T-cell (primary cell): ENCODE measurements at regions of chr10 and their contacts with region 1.

Region 1: DNA sequence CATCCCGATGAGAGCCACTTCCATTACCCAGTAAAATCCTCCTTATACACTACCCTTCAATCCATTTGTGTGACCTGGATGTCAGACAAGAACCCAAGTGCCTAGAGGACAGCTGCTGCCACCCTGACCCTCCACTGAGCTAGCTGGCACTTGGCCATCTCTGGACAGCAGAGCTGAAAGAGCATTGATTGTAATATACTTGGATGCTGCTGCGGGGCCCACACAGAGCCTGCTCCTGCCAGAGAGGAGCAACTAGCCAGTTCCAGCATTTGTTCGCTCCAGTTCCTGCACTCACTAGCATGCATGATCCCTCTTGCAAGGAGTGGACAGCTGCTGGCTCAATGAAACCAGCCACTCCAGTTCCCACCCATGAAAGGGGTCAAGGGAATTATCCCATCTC is 8.4 kb upstream of the TMEM254 start:
- DNase-seq: no peak
- ATAC-seq: no peak
- H3K4me3 ChIP-seq: no peak overlapping the region
- H3K4me3 Mint-ChIP-seq: no peak overlapping the region
- H3K27ac ChIP-seq: no peak overlapping the region
- H3K27ac Mint-ChIP-seq: no peak overlapping the region
- H3K4me1 ChIP-seq: no peaks in the 10 kb centered on the region
- H3K4me1 Mint-ChIP-seq: no peaks in the 10 kb centered on the region
- H3K27me3 ChIP-seq: peaks cover 0 to 5% of the 10 kb centered on the region in 2 experiments
- H3K27me3 Mint-ChIP-seq: no peaks in the 10 kb centered on the region

Region 2: GRCh38 chr10:80046629-80047441 is 23.2 kb before region 1 on chr10:
- CTCF ChIA-PET with region 1: interaction called in 1 of 2 experiments, 11 read pairs
- POLR2A ChIA-PET with region 1: interaction called in 1 of 2 experiments, 10 read pairs
- DNase-seq: peak; percentile 3 to 77 (median 56)
- ATAC-seq: peak; percentile 79 to 84 (median 83)
- H3K4me3 ChIP-seq: no peak overlapping the region
- H3K4me3 Mint-ChIP-seq: no peak overlapping the region
- H3K27ac ChIP-seq: no peak overlapping the region
- H3K27ac Mint-ChIP-seq: no peak overlapping the region
- H3K4me1 ChIP-seq: no peaks in the 10 kb centered on the region
- H3K4me1 Mint-ChIP-seq: peaks cover 0 to 1% (median 0%) of the 10 kb centered on the region in 3 donors
- H3K27me3 ChIP-seq: peaks cover 0 to 5% of the 10 kb centered on the region in 2 experiments
- H3K27me3 Mint-ChIP-seq: peaks cover 0 to 5% of the 10 kb centered on the region in 2 donors

Region 3: GRCh38 chr10:80126876-80127275 is 56.8 kb after region 1 on chr10:
- CTCF ChIA-PET with region 1: no interaction called
- POLR2A ChIA-PET with region 1: no interaction called
- DNase-seq: no peak
- ATAC-seq: no peak
- H3K4me3 ChIP-seq: no peak overlapping the region
- H3K4me3 Mint-ChIP-seq: no peak overlapping the region
- H3K27ac ChIP-seq: no peak overlapping the region
- H3K27ac Mint-ChIP-seq: no peak overlapping the region
- H3K4me1 ChIP-seq: no peaks in the 10 kb centered on the region
- H3K4me1 Mint-ChIP-seq: peaks cover 0 to under 1% (median 0%) of the 10 kb centered on the region in 3 donors
- H3K27me3 ChIP-seq: peaks cover 0 to 16% of the 10 kb centered on the region in 2 experiments
- H3K27me3 Mint-ChIP-seq: peaks cover 12 to 21% of the 10 kb centered on the region in 2 donors

Region 4: GRCh38 chr10:80158598-80159127 is 88.6 kb after region 1 on chr10:
- CTCF ChIA-PET with region 1: no interaction called
- POLR2A ChIA-PET with region 1: no interaction called
- DNase-seq: no peak
- ATAC-seq: no peak
- H3K4me3 ChIP-seq: no peak overlapping the region
- H3K4me3 Mint-ChIP-seq: no peak overlapping the region
- H3K27ac ChIP-seq: no peak overlapping the region
- H3K27ac Mint-ChIP-seq: peak overlapping the region in 1 of 2 donors; percentile 6
- H3K4me1 ChIP-seq: peaks cover 0 to 4% of the 10 kb centered on the region in 2 experiments
- H3K4me1 Mint-ChIP-seq: no peaks in the 10 kb centered on the region
- H3K27me3 ChIP-seq: no peaks in the 10 kb centered on the region
- H3K27me3 Mint-ChIP-seq: no peaks in the 10 kb centered on the region